Activated CD4-positive, alpha-beta T cell treated with anti-CD3 and anti-CD28 coated beads for 36 hours (primary cell): ENCODE measurements at regions of chr2 and their contacts with region 1.

Region 1: DNA sequence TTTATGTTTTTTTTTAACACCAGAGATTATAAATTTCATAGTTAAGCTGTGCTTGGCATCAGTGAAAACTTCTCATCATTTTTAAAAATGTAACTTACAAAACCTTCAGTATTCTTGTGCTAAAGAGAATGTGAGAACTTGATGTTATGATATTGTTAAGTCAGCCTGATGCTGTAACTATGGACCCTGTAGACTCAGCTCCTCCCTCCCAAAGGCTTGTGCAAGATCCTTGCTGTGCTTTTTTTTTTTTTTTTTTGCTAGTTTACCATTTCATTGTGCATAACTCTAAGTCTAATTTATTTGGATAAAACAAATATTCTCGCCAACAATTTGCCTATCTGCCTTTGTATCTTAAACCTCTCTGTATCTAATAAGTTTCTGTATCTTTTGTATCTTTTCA is 12.9 kb upstream of the TFPI start:
- DNase-seq: no peak
- ATAC-seq: no peak
- H3K4me3 Mint-ChIP-seq: no peak overlapping the region
- H3K27ac Mint-ChIP-seq: no peak overlapping the region
- H3K4me1 Mint-ChIP-seq: no peaks in the 10 kb centered on the region
- H3K27me3 Mint-ChIP-seq: no peaks in the 10 kb centered on the region

Region 2: DNA sequence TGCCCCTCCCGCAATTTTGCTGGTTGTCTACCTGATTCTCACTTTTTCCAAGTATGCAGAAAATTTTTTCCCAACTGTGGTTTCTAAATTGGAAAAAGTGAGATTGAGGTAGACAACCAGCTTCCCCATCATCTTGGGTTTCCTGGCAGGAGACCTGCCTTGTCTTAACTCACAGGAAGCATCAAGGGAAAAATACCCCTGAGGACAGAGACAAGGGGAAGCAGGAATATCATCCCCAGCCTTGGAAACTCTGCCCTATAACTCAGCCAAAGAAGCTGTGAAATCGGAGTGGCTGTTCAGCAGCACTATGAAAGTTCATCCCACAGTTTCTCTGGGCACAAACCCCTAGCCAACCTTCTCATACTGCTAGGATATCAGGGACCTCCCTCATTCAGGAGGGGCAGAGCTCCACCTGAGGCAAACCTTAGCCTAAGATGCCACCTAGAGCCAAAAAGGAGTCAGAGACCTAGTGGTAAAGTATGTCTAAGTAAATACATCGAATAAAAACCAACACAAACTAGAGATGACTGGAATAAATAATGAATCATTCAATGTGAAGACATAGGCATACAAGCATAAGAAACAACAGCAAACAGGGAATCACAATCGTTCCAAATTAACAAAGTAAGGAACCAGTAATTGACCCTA is 786.3 kb before region 1 on chr2:
- CTCF ChIA-PET with region 1: no interaction called
- POLR2A ChIA-PET with region 1: interaction called, 12 read pairs
- intact Hi-C with region 1: no loop called
- DNase-seq: no peak
- ATAC-seq: no peak
- H3K4me3 Mint-ChIP-seq: no peak overlapping the region
- H3K27ac Mint-ChIP-seq: no peak overlapping the region
- H3K4me1 Mint-ChIP-seq: no peaks in the 10 kb centered on the region
- H3K27me3 Mint-ChIP-seq: no peaks in the 10 kb centered on the region